ENCODE measurements at regions of chr22 and their contacts with region 1.

Region 1: DNA sequence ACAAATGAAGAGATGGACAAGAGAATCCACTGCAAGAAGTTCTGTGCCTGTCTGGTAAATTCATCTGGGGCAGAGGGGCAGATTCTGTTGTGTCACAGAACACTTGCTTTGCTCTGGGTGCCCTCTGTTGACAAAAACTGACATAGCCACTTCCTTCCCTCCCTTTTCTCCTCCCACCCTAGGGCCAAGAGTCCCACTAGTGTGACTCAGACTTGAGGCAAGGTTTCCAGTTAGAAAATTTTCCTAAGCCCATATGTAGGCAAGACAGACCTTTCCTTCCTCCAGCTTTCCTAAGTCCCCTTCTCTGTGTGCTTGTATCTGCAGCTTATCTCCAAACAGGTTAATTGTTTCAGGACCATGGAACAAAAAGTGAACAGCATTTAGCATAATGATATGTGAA is 106.8 kb downstream of the RBFOX2 start:
- DNase-seq: peak; percentile 53 to 66
- ATAC-seq: peak; percentile 90

Region 2: DNA sequence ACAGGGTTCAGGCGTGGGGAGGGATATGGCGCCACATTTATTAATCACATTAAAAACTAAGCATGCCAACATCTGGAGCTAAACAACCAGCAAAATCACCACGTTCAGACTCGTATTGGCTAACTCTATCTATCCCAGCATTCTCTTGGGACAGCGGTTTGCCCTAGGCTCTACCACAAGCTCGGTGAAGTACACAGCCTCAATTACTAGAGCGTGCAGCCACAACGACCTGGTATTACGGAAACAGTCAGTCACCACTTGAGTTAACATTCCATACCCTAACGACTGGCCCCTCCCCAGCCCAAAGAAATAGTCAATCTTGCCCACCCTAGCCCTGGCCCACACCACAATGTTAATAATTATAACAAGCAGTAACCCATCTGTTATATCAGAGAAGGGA is 172.0 kb before region 1 on chr22:
- intact Hi-C with region 1: loop called in 1 of 2 experiments (anchors 10 kb)
- DNase-seq: no peak
- ATAC-seq: no peak

Region 3: DNA sequence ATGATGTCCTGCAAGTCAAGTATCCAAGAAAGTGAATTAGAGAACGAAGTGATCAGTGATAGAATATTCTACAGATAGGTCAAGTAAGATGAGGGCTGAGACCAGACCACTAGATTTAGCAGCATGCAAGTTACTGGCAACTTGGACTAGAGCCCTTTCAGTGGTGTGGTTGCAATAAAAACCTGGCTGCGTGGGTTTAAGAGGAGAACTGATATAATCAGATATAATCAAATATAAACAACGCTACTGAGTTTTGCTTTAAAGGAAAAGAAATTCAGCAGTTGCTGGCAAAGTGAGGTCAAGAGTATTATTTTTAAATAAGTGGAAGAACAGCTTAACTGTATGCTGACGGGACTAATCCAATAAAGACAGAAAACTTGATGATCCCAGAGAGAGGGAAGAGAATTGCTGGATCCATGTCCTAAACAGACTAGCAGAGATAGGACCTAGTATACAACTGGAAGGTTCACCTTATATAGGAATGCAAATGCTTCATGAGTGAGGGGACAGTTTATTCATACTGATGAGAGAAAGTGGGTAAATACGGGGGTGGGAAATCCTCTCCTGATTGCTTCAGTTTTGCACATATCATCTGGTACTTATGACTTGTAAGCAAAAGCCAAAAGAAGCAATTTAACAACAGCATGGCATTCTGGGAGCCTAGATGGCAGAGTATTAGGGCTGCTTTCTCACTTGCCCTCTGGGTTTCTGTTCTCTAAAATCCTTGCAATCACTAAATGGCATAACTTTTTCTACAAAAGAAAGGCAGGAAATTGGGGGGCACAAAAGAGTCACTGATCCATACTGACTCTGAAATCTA is 39.4 kb before region 1 on chr22:
- intact Hi-C with region 1: no loop called
- DNase-seq: no peak
- ATAC-seq: peak; percentile 45